K562 (cell line): ENCODE measurements at regions of chr5 and their contacts with region 1.

Region 1: DNA sequence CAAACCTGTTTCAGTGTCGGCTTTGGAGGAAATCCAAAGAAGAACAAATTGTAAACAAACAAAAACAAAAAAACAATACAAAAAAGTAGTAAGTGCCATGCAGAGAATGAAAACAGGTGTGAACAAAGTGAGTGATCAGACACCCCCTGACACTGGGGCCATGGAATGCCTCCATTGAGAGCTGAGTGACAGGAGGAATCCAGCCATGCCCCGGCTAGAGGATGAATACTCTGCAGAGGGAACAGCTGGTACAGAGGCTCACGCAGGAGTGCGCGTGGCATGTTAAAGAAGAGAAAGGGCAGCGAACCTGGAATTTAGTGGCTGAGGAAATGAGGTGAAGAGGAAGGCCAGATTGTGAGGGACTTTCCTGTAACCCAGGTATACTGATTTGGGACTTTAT is 15.5 kb upstream of the CCNJL start:
- DNase-seq: no peak
- ATAC-seq: no peak
- H3K4me3 ChIP-seq: no peak overlapping the region
- H3K27ac ChIP-seq: no peak overlapping the region
- H3K4me1 ChIP-seq: no peaks in the 10 kb centered on the region
- H3K27me3 ChIP-seq: peaks cover 29 to 49% of the 10 kb centered on the region in 2 experiments
- CTCF ChIP-seq: no peak
- EP300 ChIP-seq: no peak
- POLR2A ChIP-seq: no peak
- RAD21 ChIP-seq: no peak

Region 2: GRCh38 chr5:160209963-160210374 is 117.8 kb before region 1 on chr5:
- CTCF ChIA-PET with region 1: no interaction called
- POLR2A ChIA-PET with region 1: no interaction called
- in situ Hi-C with region 1: no loop called
- intact Hi-C with region 1: no loop called
- DNase-seq: no peak
- ATAC-seq: no peak
- H3K4me3 ChIP-seq: no peak overlapping the region
- H3K27ac ChIP-seq: no peak overlapping the region
- H3K4me1 ChIP-seq: no peaks in the 10 kb centered on the region
- H3K27me3 ChIP-seq: peaks cover 17 to 34% of the 10 kb centered on the region in 2 experiments
- CTCF ChIP-seq: no peak
- EP300 ChIP-seq: no peak
- POLR2A ChIP-seq: no peak
- RAD21 ChIP-seq: no peak

Region 3: GRCh38 chr5:160287378-160288051 is 40.3 kb before region 1 on chr5:
- CTCF ChIA-PET with region 1: no interaction called
- POLR2A ChIA-PET with region 1: no interaction called
- in situ Hi-C with region 1: no loop called
- intact Hi-C with region 1: no loop called
- DNase-seq: no peak
- ATAC-seq: peak; percentile 54
- H3K4me3 ChIP-seq: no peak overlapping the region
- H3K27ac ChIP-seq: no peak overlapping the region
- H3K4me1 ChIP-seq: peaks cover 0 to 4% of the 10 kb centered on the region in 2 experiments; a peak in 1 of 5 replicates
- H3K27me3 ChIP-seq: peaks cover 41 to 55% of the 10 kb centered on the region in 2 experiments
- CTCF ChIP-seq: no peak
- EP300 ChIP-seq: no peak
- POLR2A ChIP-seq: no peak
- RAD21 ChIP-seq: no peak

Region 4: DNA sequence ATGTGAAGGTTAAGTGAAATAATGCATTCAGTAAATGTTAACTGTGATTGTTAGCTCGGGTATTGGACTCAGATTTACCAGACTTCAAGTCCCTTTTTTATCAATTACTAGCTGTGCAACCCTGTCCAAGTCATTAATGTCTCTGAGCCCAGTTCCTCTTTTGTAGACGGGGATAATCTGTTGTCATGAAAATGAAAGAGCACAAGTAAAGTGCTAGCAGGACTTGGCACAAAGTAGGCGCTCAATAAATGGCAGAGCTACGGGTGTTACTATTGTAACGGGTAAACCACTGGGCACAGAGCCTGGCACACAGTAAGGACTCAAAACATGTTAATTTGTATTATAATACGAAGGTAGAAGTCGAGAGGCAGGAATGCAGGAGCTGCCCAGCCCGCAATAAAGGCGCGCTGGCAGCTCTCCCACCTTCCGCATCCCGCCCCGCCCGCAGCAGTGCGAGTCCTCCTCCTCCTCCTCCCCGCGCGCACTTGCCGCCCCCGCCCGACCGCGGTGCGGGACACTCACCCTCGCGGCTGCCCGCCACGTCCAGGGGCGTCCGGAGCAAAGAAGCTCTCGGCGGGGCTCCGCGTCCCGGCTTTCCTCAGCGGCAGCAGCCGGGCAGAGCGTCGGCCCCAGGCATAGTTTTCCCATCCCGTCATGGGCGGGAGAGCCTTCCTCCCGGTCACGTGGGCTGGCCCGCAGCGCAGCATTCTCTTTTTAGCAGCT is 42.3 kb after region 1 on chr5 and contains the start of gene C1QTNF2:
- CTCF ChIA-PET with region 1: no interaction called
- POLR2A ChIA-PET with region 1: no interaction called
- in situ Hi-C with region 1: no loop called
- intact Hi-C with region 1: loop called (anchors 1 kb)
- DNase-seq: peak in 2 of 4 experiments; percentile 26 to 31
- ATAC-seq: peak; percentile 71
- H3K4me3 ChIP-seq: peak within 1 kb of the TSS; percentile 31
- H3K27ac ChIP-seq: no peak within 1 kb of the TSS
- H3K4me1 ChIP-seq: peaks cover 6% of the 10 kb centered on the region in 2 experiments; a peak in 4 of 5 replicates
- H3K27me3 ChIP-seq: peaks cover 34 to 37% of the 10 kb centered on the region in 2 experiments
- CTCF ChIP-seq: no peak
- EP300 ChIP-seq: no peak
- POLR2A ChIP-seq: no peak
- RAD21 ChIP-seq: no peak
- polyA plus RNA-seq, gene C1QTNF2: not detected

Region 5: GRCh38 chr5:160506006-160507005 is 178.5 kb after region 1 on chr5:
- CTCF ChIA-PET with region 1: no interaction called
- POLR2A ChIA-PET with region 1: no interaction called
- in situ Hi-C with region 1: no loop called
- intact Hi-C with region 1: no loop called
- DNase-seq: no peak
- ATAC-seq: peak; percentile 50
- H3K4me3 ChIP-seq: no peak overlapping the region
- H3K27ac ChIP-seq: no peak overlapping the region
- H3K4me1 ChIP-seq: no peaks in the 10 kb centered on the region; a peak in 1 of 5 replicates
- H3K27me3 ChIP-seq: no peaks in the 10 kb centered on the region
- CTCF ChIP-seq: no peak
- EP300 ChIP-seq: no peak
- POLR2A ChIP-seq: no peak
- RAD21 ChIP-seq: no peak